ENCODE measurements at regions of chr16 and their contacts with region 1.

Region 1: DNA sequence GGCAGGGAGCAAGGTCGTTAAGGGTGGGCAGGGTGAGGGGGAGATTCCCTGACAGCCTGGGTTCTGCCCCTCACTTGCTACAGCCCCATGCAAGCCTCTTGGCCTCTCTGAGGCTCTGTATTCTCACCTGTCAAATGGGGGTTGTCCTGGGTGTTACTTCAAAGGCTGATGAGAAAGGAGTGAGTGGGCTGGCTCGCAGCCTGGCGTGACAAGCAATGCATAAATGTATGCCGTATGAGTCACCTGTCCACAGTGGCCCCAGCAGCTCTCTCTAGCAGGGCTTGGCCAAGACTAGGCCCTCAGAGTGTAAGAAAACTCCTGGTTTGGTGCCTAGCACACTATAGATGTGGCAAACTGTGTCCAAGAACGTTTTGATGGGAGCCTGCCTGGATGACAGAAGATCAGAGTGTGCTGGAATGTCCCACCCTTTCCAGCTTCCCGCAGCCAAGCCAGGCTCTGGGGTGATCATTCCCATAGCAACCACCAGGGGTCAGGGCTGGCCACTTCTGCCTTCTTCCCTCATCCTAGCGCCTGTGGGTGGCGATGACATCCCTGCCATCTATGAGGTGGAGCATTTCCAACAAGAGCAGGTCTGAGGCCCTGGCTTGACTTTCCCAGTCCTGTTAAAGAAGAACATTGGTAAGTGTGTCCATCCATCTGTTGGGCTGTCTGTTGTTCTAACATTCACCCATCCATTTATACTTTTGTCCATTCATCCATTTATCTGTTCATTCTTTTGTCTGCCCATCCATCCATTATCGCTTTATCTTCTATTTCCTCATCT is 37.2 kb upstream of the ADGRG1 start:
- DNase-seq: peak; percentile 94
- ATAC-seq: peak; percentile 81
- H3K4me3 Mint-ChIP-seq: peak overlapping the region; percentile 77
- H3K27ac Mint-ChIP-seq: peak overlapping the region; percentile 98
- H3K4me1 Mint-ChIP-seq: peaks cover 49% of the 10 kb centered on the region
- H3K27me3 Mint-ChIP-seq: no peaks in the 10 kb centered on the region
- CTCF ChIP-seq: peak; percentile 94

Region 2: GRCh38 chr16:57544119-57544653 is 47.1 kb before region 1 on chr16:
- CTCF ChIA-PET with region 1: interaction called, 8 read pairs
- POLR2A ChIA-PET with region 1: interaction called, 5 read pairs
- intact Hi-C with region 1: loop called (anchors 5 kb)
- DNase-seq: peak; percentile 46
- ATAC-seq: peak; percentile 50
- H3K4me3 Mint-ChIP-seq: peak overlapping the region; percentile 66
- H3K27ac Mint-ChIP-seq: peak overlapping the region; percentile 13
- H3K4me1 Mint-ChIP-seq: peaks cover 57% of the 10 kb centered on the region
- H3K27me3 Mint-ChIP-seq: no peaks in the 10 kb centered on the region
- CTCF ChIP-seq: no peak

Region 3: DNA sequence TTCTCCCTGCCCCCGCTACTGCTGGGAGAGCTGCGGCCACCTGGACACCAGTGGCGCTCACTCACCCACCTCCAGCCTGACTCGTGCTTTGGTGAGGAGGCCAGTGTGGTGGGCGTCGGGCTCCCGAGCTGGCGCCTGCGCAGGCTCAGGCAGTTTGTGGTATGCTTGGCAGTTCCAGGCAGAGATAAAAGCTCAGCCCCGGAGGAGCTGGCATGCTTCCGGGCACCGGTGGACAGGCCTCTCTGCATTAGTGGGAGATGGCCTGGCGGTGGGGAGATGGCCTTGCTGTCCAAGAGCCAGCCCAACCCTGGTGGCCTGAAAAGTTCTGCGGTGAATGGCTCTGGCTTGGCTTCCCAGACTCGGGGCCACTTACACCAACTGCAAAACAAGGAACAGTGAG is 41.3 kb after region 1 on chr16:
- CTCF ChIA-PET with region 1: no interaction called
- POLR2A ChIA-PET with region 1: no interaction called
- intact Hi-C with region 1: no loop called
- DNase-seq: no peak
- ATAC-seq: no peak
- H3K4me3 Mint-ChIP-seq: no peak overlapping the region
- H3K27ac Mint-ChIP-seq: no peak overlapping the region
- H3K4me1 Mint-ChIP-seq: peaks cover 14% of the 10 kb centered on the region
- H3K27me3 Mint-ChIP-seq: peaks cover 9% of the 10 kb centered on the region
- CTCF ChIP-seq: no peak

Region 4: DNA sequence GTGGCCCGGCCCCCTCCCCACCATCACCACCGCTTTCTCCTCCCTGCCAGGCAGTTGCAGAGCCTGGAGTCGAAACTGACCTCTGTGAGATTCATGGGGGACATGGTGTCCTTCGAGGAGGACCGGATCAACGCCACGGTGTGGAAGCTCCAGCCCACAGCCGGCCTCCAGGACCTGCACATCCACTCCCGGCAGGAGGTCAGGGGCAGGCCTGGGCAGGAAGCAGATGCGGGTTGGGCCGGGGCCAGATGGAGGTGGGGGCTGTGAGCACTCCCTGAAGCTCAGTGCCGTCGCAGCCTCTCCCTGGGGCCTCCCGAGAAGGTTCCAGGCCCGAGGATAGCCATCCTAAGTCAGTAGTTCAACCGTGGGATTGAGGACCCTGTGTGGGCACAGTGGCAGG is 62.7 kb after region 1 on chr16:
- CTCF ChIA-PET with region 1: interaction called, 101 read pairs
- POLR2A ChIA-PET with region 1: interaction called, 44 read pairs
- intact Hi-C with region 1: loop called (anchors 5 kb)
- DNase-seq: no peak
- ATAC-seq: no peak
- H3K4me3 Mint-ChIP-seq: no peak overlapping the region
- H3K27ac Mint-ChIP-seq: no peak overlapping the region
- H3K4me1 Mint-ChIP-seq: peaks cover 15% of the 10 kb centered on the region
- H3K27me3 Mint-ChIP-seq: no peaks in the 10 kb centered on the region
- CTCF ChIP-seq: no peak

Measured in activated CD8-positive, alpha-beta T cell treated with anti-CD3 and anti-CD28 coated beads for 36 hours (primary cell).